CD4-positive, alpha-beta memory T cell (primary cell): ENCODE measurements at regions of chr14 and their contacts with region 1.

Region 1: GRCh38 chr14:73472185-73473114 is 14.1 kb upstream of the NUMB start:
- DNase-seq: peak in 4 of 5 donors; percentile 55 to 66 (median 58)
- H3K4me3 ChIP-seq: no peak overlapping the region
- H3K4me3 Mint-ChIP-seq: no peak overlapping the region
- H3K27ac ChIP-seq: no peak overlapping the region
- H3K27ac Mint-ChIP-seq: no peak overlapping the region
- H3K4me1 ChIP-seq: peaks cover 4% of the 10 kb centered on the region
- H3K4me1 Mint-ChIP-seq: peaks cover 2 to 7% (median 4%) of the 10 kb centered on the region in 4 donors
- H3K27me3 ChIP-seq: no peaks in the 10 kb centered on the region
- H3K27me3 Mint-ChIP-seq: no peaks in the 10 kb centered on the region

Region 2: GRCh38 chr14:73173092-73173735 is 299.2 kb before region 1 on chr14:
- CTCF ChIA-PET with region 1: interaction called, 20 read pairs
- POLR2A ChIA-PET with region 1: interaction called, 3 read pairs
- intact Hi-C with region 1: loop called (anchors 1 kb)
- DNase-seq: peak in 4 of 5 donors; percentile 12 to 21 (median 15)
- H3K4me3 ChIP-seq: no peak overlapping the region
- H3K4me3 Mint-ChIP-seq: no peak overlapping the region
- H3K27ac ChIP-seq: no peak overlapping the region
- H3K27ac Mint-ChIP-seq: peak overlapping the region in 2 of 7 donors; percentile 15 to 78
- H3K4me1 ChIP-seq: no peaks in the 10 kb centered on the region
- H3K4me1 Mint-ChIP-seq: peaks cover 0 to 7% (median 2%) of the 10 kb centered on the region in 4 donors
- H3K27me3 ChIP-seq: no peaks in the 10 kb centered on the region
- H3K27me3 Mint-ChIP-seq: no peaks in the 10 kb centered on the region

Region 3: DNA sequence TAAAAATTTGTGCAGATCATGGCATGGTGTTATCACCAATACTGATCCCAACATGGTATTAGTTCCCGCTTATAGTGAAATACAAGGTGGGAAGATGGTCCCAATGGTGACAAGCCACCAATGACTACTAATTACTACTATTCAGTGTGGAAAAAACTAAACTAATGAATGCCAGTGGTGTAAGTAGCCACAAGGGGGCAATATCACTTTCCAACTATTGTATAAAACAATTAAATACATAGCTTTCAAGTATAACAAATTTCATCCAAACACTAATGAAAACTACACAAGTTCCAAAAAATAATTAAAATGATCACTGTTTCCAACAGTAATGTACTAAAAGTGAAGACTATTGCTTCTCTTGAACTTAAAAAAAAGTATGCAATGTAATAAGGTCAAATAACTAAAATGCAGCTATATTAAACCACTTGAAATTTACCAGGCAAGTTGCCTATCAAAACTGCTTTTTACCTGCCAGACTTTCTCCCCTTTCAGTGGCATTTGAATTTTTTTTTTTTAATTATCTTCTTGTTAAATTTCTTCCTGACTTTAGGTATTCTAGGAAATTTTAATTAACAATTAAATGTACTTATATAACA is 177.2 kb before region 1 on chr14:
- CTCF ChIA-PET with region 1: interaction called, 147 read pairs
- POLR2A ChIA-PET with region 1: interaction called, 7 read pairs
- intact Hi-C with region 1: no loop called
- DNase-seq: peak in 4 of 5 donors; percentile 30 to 46 (median 39)
- H3K4me3 ChIP-seq: no peak overlapping the region
- H3K4me3 Mint-ChIP-seq: no peak overlapping the region
- H3K27ac ChIP-seq: no peak overlapping the region
- H3K27ac Mint-ChIP-seq: peak overlapping the region in 1 of 7 donors; percentile 29
- H3K4me1 ChIP-seq: peaks cover 1% of the 10 kb centered on the region
- H3K4me1 Mint-ChIP-seq: peaks cover 0 to 7% (median 3%) of the 10 kb centered on the region in 4 donors
- H3K27me3 ChIP-seq: no peaks in the 10 kb centered on the region
- H3K27me3 Mint-ChIP-seq: no peaks in the 10 kb centered on the region

Region 4: GRCh38 chr14:73458151-73458976 is 14.1 kb before region 1 on chr14 and contains the start of gene NUMB:
- CTCF ChIA-PET with region 1: interaction called, 28 read pairs
- POLR2A ChIA-PET with region 1: interaction called, 5 read pairs
- intact Hi-C with region 1: no loop called
- DNase-seq: peak; percentile 97 to 99 (median 98)
- H3K4me3 ChIP-seq: peak within 1 kb of the TSS; percentile 58 to 75
- H3K4me3 Mint-ChIP-seq: peak within 1 kb of the TSS; percentile 95 to 100 (median 98)
- H3K27ac ChIP-seq: peak within 1 kb of the TSS; percentile 86
- H3K27ac Mint-ChIP-seq: peak within 1 kb of the TSS; percentile 77 to 99 (median 97)
- H3K4me1 ChIP-seq: peaks cover 41% of the 10 kb centered on the region
- H3K4me1 Mint-ChIP-seq: peaks cover 25 to 46% (median 34%) of the 10 kb centered on the region in 4 donors
- H3K27me3 ChIP-seq: no peaks in the 10 kb centered on the region
- H3K27me3 Mint-ChIP-seq: no peaks in the 10 kb centered on the region
- total RNA-seq, gene NUMB: 45.3 to 47.3 TPM

Region 5: DNA sequence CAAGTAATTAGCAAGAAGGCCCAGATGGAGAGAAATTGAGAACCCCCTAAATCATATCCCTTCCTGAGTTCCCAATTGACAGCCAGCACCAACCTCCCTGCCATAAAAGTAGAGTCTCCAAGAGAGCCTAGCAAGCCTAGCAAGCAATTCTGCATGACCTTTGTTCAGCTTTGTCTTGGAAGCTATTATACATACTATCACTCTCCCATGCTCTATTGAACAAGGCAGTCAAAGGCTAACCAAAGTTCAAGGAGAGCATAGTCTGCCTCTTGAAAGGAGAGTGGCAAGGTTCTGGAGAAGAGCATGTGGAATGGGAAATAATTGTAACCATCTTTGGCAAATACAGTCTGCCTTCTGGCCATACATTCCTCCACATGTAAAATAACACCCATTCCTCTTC is 127.0 kb after region 1 on chr14:
- CTCF ChIA-PET with region 1: no interaction called
- POLR2A ChIA-PET with region 1: no interaction called
- intact Hi-C with region 1: no loop called
- DNase-seq: no peak
- H3K4me3 ChIP-seq: no peak overlapping the region
- H3K4me3 Mint-ChIP-seq: no peak overlapping the region
- H3K27ac ChIP-seq: no peak overlapping the region
- H3K27ac Mint-ChIP-seq: no peak overlapping the region
- H3K4me1 ChIP-seq: no peaks in the 10 kb centered on the region
- H3K4me1 Mint-ChIP-seq: peaks cover 0 to 4% (median 0%) of the 10 kb centered on the region in 4 donors
- H3K27me3 ChIP-seq: no peaks in the 10 kb centered on the region
- H3K27me3 Mint-ChIP-seq: peaks cover 0 to 1% of the 10 kb centered on the region in 2 donors

Region 6: GRCh38 chr14:73713803-73714655 is 241.6 kb after region 1 on chr14 and contains the start of gene PNMA1:
- CTCF ChIA-PET with region 1: no interaction called
- POLR2A ChIA-PET with region 1: no interaction called
- intact Hi-C with region 1: no loop called
- DNase-seq: peak; percentile 84 to 87 (median 85)
- H3K4me3 ChIP-seq: peak within 1 kb of the TSS; percentile 92 to 96
- H3K4me3 Mint-ChIP-seq: peak within 1 kb of the TSS; percentile 89 to 100 (median 98)
- H3K27ac ChIP-seq: peak within 1 kb of the TSS; percentile 80
- H3K27ac Mint-ChIP-seq: peak within 1 kb of the TSS; percentile 89 to 99 (median 95)
- H3K4me1 ChIP-seq: peaks cover 26% of the 10 kb centered on the region
- H3K4me1 Mint-ChIP-seq: peaks cover 18 to 35% (median 24%) of the 10 kb centered on the region in 4 donors
- H3K27me3 ChIP-seq: no peaks in the 10 kb centered on the region
- H3K27me3 Mint-ChIP-seq: no peaks in the 10 kb centered on the region
- total RNA-seq, gene PNMA1: 53.3 to 59.3 TPM